ENCODE measurements at regions of chr2 and their contacts with region 1.

Region 1: DNA sequence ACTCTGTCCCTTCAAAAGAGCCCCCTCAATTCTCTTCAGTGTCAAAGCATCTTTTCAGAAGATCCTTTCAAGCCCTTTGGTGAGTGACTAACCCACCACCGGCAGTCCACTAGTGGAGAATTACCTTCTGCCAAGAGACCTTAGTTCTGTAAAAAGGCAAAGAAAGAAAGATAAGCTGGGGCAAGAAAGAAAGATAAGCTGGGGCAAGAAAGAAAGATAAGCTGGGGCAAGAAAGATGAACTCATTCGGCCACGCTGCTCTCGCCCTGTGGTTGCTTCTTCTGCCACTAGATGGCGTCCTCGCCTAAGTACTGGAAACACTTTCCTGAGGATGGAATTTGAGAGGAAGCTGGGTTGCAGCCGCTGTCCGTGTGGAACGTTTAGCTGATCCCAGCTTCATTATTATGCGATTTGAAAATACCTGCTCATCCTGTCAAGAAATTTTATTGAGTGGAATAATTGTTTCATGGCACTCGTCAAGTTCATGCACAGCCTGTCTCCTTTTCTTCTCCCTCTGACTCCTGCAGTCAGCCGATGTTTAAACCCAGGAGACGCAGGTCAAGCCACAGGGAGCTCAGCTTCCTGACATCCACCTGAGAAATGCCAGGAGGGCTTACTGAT is 17.3 kb upstream of the ANXA4 start:
- DNase-seq: peak; percentile 69 to 91 (median 83)
- ATAC-seq: peak; percentile 85
- H3K4me3 ChIP-seq: no peak overlapping the region
- H3K4me3 Mint-ChIP-seq: peak overlapping the region; percentile 27
- H3K27ac ChIP-seq: no peak overlapping the region
- H3K27ac Mint-ChIP-seq: no peak overlapping the region
- H3K4me1 ChIP-seq: peaks cover 9% of the 10 kb centered on the region
- H3K4me1 Mint-ChIP-seq: peaks cover 7% of the 10 kb centered on the region
- H3K27me3 ChIP-seq: no peaks in the 10 kb centered on the region
- H3K27me3 Mint-ChIP-seq: no peaks in the 10 kb centered on the region
- CTCF ChIP-seq: peak; percentile 100

Region 2: GRCh38 chr2:68157402-68158133 is 1567.1 kb before region 1 on chr2 and contains the start of gene PNO1:
- CTCF ChIA-PET with region 1: no interaction called
- POLR2A ChIA-PET with region 1: no interaction called
- intact Hi-C with region 1: no loop called
- DNase-seq: peak; percentile 93 to 98 (median 97)
- ATAC-seq: peak; percentile 91
- H3K4me3 ChIP-seq: peak within 1 kb of the TSS; percentile 94
- H3K4me3 Mint-ChIP-seq: peak within 1 kb of the TSS; percentile 96
- H3K27ac ChIP-seq: peak within 1 kb of the TSS; percentile 92 to 99
- H3K27ac Mint-ChIP-seq: peak within 1 kb of the TSS; percentile 98
- H3K4me1 ChIP-seq: peaks cover 26% of the 10 kb centered on the region
- H3K4me1 Mint-ChIP-seq: peaks cover 61% of the 10 kb centered on the region
- H3K27me3 ChIP-seq: no peaks in the 10 kb centered on the region
- H3K27me3 Mint-ChIP-seq: no peaks in the 10 kb centered on the region
- CTCF ChIP-seq: no peak
- total RNA-seq, gene PNO1: 27.1 to 29.5 TPM

Region 3: DNA sequence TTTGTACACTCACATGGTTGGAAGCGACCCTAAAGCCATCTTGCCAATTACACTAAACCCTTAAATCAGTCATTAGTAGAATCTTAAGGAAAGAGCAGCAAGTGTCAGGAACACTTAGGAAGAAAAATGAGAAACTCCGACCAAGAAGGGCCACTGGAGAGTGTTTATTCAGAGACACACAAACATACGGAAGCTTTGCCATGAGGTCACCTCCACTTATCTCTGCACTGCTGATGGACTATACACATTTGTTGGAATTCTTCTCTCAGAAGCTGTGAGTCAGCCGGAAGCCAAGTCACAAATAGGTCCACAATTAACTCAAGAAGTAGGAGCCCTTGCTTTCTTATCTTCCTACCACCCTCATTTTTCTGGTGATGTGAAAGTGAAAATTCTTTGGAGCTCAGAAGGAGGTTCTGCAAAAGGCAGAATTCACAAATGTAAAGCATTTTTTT is 875.0 kb before region 1 on chr2:
- CTCF ChIA-PET with region 1: no interaction called
- POLR2A ChIA-PET with region 1: no interaction called
- intact Hi-C with region 1: no loop called
- DNase-seq: no peak
- ATAC-seq: no peak
- H3K4me3 ChIP-seq: no peak overlapping the region
- H3K4me3 Mint-ChIP-seq: no peak overlapping the region
- H3K27ac ChIP-seq: no peak overlapping the region
- H3K27ac Mint-ChIP-seq: no peak overlapping the region
- H3K4me1 ChIP-seq: no peaks in the 10 kb centered on the region
- H3K4me1 Mint-ChIP-seq: no peaks in the 10 kb centered on the region
- H3K27me3 ChIP-seq: no peaks in the 10 kb centered on the region
- H3K27me3 Mint-ChIP-seq: peaks cover 28% of the 10 kb centered on the region
- CTCF ChIP-seq: no peak

Region 4: DNA sequence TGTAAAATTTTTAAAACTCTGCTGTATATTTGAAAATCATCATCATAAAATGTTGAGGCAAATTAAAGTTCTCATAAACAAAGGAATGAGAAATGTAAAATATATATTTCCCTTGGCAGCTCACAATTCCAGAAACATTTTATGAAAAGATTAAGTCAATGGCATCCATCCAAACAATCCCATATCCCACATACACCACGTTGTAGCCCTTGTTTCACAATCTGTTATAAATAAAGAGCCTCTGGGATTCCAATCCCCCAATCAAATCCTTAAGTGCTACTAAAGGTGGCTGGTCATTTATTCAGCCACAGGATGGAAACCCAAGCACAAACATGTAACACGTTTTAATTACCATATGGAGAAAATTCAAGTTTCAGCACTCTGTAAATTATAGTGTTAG is 389.3 kb before region 1 on chr2:
- CTCF ChIA-PET with region 1: no interaction called
- POLR2A ChIA-PET with region 1: no interaction called
- intact Hi-C with region 1: no loop called
- DNase-seq: no peak
- ATAC-seq: no peak
- H3K4me3 ChIP-seq: no peak overlapping the region
- H3K4me3 Mint-ChIP-seq: no peak overlapping the region
- H3K27ac ChIP-seq: no peak overlapping the region
- H3K27ac Mint-ChIP-seq: no peak overlapping the region
- H3K4me1 ChIP-seq: no peaks in the 10 kb centered on the region
- H3K4me1 Mint-ChIP-seq: no peaks in the 10 kb centered on the region
- H3K27me3 ChIP-seq: no peaks in the 10 kb centered on the region
- H3K27me3 Mint-ChIP-seq: no peaks in the 10 kb centered on the region
- CTCF ChIP-seq: no peak

Region 5: DNA sequence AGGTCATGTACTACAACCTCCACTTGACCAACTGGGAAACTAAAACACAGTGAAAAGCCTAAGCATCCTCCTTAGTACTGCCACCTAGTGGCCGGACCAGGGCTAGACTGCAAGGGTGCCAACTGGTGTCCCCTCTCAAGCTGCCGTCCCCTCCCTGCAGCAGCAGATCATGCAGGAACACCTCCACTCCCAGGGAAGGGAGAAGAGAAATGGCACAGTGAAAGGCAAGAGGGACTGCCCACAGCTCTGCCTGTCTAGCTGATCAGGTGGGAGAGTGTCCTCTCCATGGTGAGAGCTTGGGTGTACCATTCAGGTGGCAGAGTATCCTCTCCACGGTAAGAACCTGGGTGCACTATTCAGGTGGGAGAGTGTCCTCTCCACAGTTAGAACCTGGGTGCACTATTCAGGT is 159.2 kb before region 1 on chr2:
- CTCF ChIA-PET with region 1: interaction called, 12 read pairs
- POLR2A ChIA-PET with region 1: interaction called, 3 read pairs
- intact Hi-C with region 1: no loop called
- DNase-seq: peak; percentile 41 to 82 (median 62)
- ATAC-seq: peak; percentile 77
- H3K4me3 ChIP-seq: no peak overlapping the region
- H3K4me3 Mint-ChIP-seq: peak overlapping the region; percentile 65
- H3K27ac ChIP-seq: no peak overlapping the region
- H3K27ac Mint-ChIP-seq: peak overlapping the region; percentile 82
- H3K4me1 ChIP-seq: peaks cover 59% of the 10 kb centered on the region
- H3K4me1 Mint-ChIP-seq: peaks cover 96% of the 10 kb centered on the region
- H3K27me3 ChIP-seq: no peaks in the 10 kb centered on the region
- H3K27me3 Mint-ChIP-seq: no peaks in the 10 kb centered on the region
- CTCF ChIP-seq: peak; percentile 94

Region 6: DNA sequence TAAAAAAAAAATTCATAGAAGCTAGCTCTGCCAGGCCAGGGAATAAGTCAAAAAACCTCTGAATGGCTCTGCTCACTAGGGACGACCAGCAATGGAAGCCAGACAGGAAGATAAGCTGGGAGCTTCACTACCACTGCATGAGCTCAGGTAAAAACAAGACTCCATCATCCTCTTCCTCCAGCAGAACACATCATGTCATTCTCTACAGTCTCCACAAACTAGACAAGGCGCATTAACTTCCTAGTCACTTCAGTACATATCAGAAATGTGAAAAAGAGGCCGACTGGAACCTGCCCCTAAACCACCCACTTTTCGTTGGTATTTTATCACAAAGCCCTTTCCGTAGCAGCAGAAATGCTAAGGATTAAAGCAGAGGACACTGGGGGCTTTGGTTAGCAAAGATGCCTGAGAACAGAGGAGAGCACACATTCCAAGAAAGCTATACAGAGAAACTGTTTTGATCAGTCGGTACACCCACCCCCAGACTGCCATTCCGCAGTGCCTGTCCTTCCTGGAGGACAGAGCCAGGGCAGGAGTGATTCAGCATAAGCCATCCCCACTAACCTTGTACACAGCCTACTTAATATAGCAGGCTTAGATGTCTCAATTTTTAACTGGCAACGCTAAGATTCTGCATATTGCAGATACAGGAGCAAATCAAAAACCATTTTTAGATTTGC is 134.5 kb before region 1 on chr2:
- CTCF ChIA-PET with region 1: interaction called, 12 read pairs
- POLR2A ChIA-PET with region 1: no interaction called
- intact Hi-C with region 1: no loop called
- DNase-seq: no peak
- ATAC-seq: peak; percentile 64
- H3K4me3 ChIP-seq: no peak overlapping the region
- H3K4me3 Mint-ChIP-seq: peak overlapping the region; percentile 56
- H3K27ac ChIP-seq: no peak overlapping the region
- H3K27ac Mint-ChIP-seq: peak overlapping the region; percentile 76
- H3K4me1 ChIP-seq: peaks cover 60% of the 10 kb centered on the region
- H3K4me1 Mint-ChIP-seq: peaks cover 83% of the 10 kb centered on the region
- H3K27me3 ChIP-seq: no peaks in the 10 kb centered on the region
- H3K27me3 Mint-ChIP-seq: no peaks in the 10 kb centered on the region
- CTCF ChIP-seq: no peak

Region 7: DNA sequence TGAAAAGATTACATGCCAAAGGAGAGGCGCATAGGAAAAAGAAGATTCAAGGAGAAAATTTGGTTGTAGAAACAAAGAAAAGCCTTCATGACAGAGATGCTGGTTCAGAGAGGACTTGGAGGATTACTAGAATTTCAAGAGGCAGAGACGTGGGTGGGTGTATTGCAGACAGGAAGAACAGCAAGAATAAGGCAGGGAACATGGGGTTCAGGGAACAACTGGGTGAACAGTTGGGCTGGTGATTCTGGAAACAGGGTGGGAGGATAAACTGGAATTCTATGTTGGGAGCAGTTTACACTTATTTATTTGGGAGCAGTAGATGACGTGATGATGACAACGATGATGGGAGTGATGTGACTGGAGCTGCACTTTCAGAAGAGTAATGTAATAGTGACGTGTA is 86.4 kb after region 1 on chr2:
- CTCF ChIA-PET with region 1: interaction called, 81 read pairs
- POLR2A ChIA-PET with region 1: interaction called, 21 read pairs
- intact Hi-C with region 1: no loop called
- DNase-seq: no peak
- ATAC-seq: no peak
- H3K4me3 ChIP-seq: no peak overlapping the region
- H3K4me3 Mint-ChIP-seq: no peak overlapping the region
- H3K27ac ChIP-seq: no peak overlapping the region
- H3K27ac Mint-ChIP-seq: no peak overlapping the region
- H3K4me1 ChIP-seq: no peaks in the 10 kb centered on the region
- H3K4me1 Mint-ChIP-seq: no peaks in the 10 kb centered on the region
- H3K27me3 ChIP-seq: no peaks in the 10 kb centered on the region
- H3K27me3 Mint-ChIP-seq: no peaks in the 10 kb centered on the region
- CTCF ChIP-seq: no peak

Region 8: GRCh38 chr2:69816923-69817542 is 92.4 kb after region 1 on chr2:
- CTCF ChIA-PET with region 1: interaction called, 81 read pairs
- POLR2A ChIA-PET with region 1: interaction called, 21 read pairs
- intact Hi-C with region 1: loop called (anchors 1 kb)
- DNase-seq: peak; percentile 46 to 89 (median 63)
- ATAC-seq: peak; percentile 95
- H3K4me3 ChIP-seq: no peak overlapping the region
- H3K4me3 Mint-ChIP-seq: no peak overlapping the region
- H3K27ac ChIP-seq: no peak overlapping the region
- H3K27ac Mint-ChIP-seq: no peak overlapping the region
- H3K4me1 ChIP-seq: no peaks in the 10 kb centered on the region
- H3K4me1 Mint-ChIP-seq: peaks cover 5% of the 10 kb centered on the region
- H3K27me3 ChIP-seq: no peaks in the 10 kb centered on the region
- H3K27me3 Mint-ChIP-seq: no peaks in the 10 kb centered on the region
- CTCF ChIP-seq: peak; percentile 87

Region 9: DNA sequence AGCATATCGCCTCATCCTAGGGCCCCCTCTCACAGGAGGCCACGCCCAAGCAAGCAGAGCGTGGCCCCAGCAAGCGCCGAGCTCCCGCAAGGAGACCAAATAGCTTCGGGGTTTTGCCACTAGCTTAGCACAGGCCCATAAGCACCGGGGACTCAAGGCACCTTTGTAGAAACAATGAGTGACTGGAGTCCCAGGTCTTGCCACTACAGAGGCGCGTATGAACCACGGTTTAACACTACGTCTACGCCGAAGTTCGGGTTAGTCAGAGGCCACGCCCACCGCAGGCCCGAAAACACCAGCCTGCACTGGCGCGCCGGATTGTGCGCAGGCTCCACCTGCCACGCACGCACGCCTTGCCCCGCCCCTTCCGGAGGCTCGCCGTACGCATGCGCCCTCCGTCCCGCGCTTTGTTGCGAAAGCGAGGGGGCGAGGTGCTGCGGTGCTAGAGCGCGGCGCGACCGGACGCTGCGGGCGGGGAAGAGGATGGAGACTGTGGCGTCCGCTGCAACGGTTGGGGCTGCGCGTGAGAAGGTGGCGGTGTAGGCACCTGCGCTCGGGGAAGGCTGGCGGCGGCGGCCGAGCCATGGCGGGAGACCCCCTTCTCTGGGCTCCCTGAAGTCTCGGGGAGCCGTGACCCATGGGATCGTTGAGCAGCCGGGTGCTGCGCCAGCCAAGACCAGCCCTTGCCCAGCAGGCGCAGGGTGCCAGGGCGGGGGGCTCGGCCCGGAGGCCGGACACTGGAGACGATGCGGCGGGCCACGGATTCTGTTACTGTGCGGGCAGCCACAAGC is 104.8 kb after region 1 on chr2 and contains the start of gene GMCL1:
- CTCF ChIA-PET with region 1: interaction called, 14 read pairs
- POLR2A ChIA-PET with region 1: interaction called, 5 read pairs
- intact Hi-C with region 1: no loop called
- DNase-seq: peak; percentile 97 to 100 (median 98)
- ATAC-seq: peak; percentile 93
- H3K4me3 ChIP-seq: peak within 1 kb of the TSS; percentile 74
- H3K4me3 Mint-ChIP-seq: peak within 1 kb of the TSS; percentile 99
- H3K27ac ChIP-seq: peak within 1 kb of the TSS; percentile 89 to 93
- H3K27ac Mint-ChIP-seq: peak within 1 kb of the TSS; percentile 99
- H3K4me1 ChIP-seq: peaks cover 33% of the 10 kb centered on the region
- H3K4me1 Mint-ChIP-seq: peaks cover 65% of the 10 kb centered on the region
- H3K27me3 ChIP-seq: no peaks in the 10 kb centered on the region
- H3K27me3 Mint-ChIP-seq: no peaks in the 10 kb centered on the region
- CTCF ChIP-seq: no peak
- total RNA-seq, gene GMCL1: 29.7 to 29.8 TPM

Region 10: GRCh38 chr2:69893684-69894551 is 169.3 kb after region 1 on chr2 and contains the start of gene SNRNP27:
- CTCF ChIA-PET with region 1: no interaction called
- POLR2A ChIA-PET with region 1: no interaction called
- intact Hi-C with region 1: loop called in 1 of 2 experiments (anchors 10 kb)
- DNase-seq: peak; percentile 74 to 90 (median 81)
- ATAC-seq: peak; percentile 93
- H3K4me3 ChIP-seq: peak within 1 kb of the TSS; percentile 84
- H3K4me3 Mint-ChIP-seq: peak within 1 kb of the TSS; percentile 100
- H3K27ac ChIP-seq: peak within 1 kb of the TSS; percentile 66 to 77
- H3K27ac Mint-ChIP-seq: peak within 1 kb of the TSS; percentile 99
- H3K4me1 ChIP-seq: peaks cover 19% of the 10 kb centered on the region
- H3K4me1 Mint-ChIP-seq: peaks cover 51% of the 10 kb centered on the region
- H3K27me3 ChIP-seq: no peaks in the 10 kb centered on the region
- H3K27me3 Mint-ChIP-seq: no peaks in the 10 kb centered on the region
- CTCF ChIP-seq: no peak
- total RNA-seq, gene SNRNP27: 50.9 to 54.8 TPM

Region 11: DNA sequence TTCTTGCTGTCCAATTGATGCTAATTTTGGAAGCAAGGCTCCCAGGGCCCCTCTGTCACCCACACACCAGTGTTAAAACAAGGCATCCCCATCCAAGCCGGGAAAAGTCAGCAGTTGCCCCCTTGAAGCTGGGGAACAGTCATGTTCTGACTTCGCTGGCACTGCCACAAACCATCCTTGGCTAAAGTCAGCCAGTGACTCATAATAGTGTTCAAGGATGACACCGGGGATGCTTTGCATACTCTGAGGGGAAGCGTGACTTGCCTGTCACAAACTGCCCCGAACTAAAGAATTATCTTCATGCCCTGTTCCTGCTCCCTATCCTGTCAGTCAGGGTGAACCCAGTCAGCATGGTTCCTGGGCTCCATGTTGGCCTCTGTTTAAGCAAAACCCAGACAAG is 791.9 kb after region 1 on chr2:
- CTCF ChIA-PET with region 1: no interaction called
- POLR2A ChIA-PET with region 1: no interaction called
- intact Hi-C with region 1: no loop called
- DNase-seq: peak in 2 of 14 experiments; percentile 52 to 65
- ATAC-seq: no peak
- H3K4me3 ChIP-seq: no peak overlapping the region
- H3K4me3 Mint-ChIP-seq: no peak overlapping the region
- H3K27ac ChIP-seq: no peak overlapping the region
- H3K27ac Mint-ChIP-seq: no peak overlapping the region
- H3K4me1 ChIP-seq: peaks cover 4% of the 10 kb centered on the region
- H3K4me1 Mint-ChIP-seq: no peaks in the 10 kb centered on the region
- H3K27me3 ChIP-seq: no peaks in the 10 kb centered on the region
- H3K27me3 Mint-ChIP-seq: no peaks in the 10 kb centered on the region
- CTCF ChIP-seq: no peak